Activated CD4-positive, alpha-beta T cell treated with anti-CD3 and anti-CD28 coated beads, Interleukin-2, amount 10 ng/mL, durations not matched to agents 24 days and 14 days (primary cell): ENCODE measurements at regions of chr18 and their contacts with region 1.

Region 1: DNA sequence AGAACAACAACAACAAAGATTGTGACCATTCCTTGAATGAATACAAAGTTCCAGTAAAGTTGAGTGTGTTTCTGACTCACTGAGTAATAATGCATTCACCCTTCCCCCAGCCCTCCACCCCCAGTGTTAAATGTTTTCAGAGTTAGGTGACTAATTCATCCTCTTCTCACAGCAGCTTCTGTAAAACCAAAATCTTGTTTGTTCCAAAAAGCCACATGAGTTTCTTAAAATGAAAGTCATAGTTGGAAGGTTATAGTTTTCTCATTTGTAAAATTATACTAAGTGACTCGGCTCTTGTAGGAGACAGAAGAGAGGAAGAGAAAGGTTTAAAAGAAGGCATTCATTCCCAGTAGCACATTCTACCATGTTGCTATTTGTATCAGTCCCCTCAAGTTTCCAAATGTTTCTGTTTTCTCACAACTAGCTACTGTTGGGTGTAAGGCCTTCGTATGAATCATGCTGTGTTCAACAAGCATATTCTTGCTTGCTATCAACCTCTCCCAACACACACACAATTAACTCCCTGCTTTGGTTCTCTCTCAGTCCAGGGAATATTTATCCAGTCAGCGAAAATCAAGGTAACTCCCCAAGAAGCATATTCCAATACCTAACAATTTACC is 75.3 kb downstream of the MBD2 start:
- DNase-seq: peak; percentile 75
- H3K4me3 Mint-ChIP-seq: peak overlapping the region; percentile 64
- H3K27ac Mint-ChIP-seq: peak overlapping the region; percentile 93
- H3K4me1 Mint-ChIP-seq: peaks cover 50% of the 10 kb centered on the region
- H3K27me3 Mint-ChIP-seq: no peaks in the 10 kb centered on the region

Region 2: GRCh38 chr18:54129448-54130067 is 19.6 kb before region 1 on chr18:
- intact Hi-C with region 1: loop called (anchors 2 kb)
- DNase-seq: peak; percentile 57
- H3K4me3 Mint-ChIP-seq: peak overlapping the region; percentile 32
- H3K27ac Mint-ChIP-seq: peak overlapping the region; percentile 55
- H3K4me1 Mint-ChIP-seq: peaks cover 15% of the 10 kb centered on the region
- H3K27me3 Mint-ChIP-seq: no peaks in the 10 kb centered on the region

Region 3: DNA sequence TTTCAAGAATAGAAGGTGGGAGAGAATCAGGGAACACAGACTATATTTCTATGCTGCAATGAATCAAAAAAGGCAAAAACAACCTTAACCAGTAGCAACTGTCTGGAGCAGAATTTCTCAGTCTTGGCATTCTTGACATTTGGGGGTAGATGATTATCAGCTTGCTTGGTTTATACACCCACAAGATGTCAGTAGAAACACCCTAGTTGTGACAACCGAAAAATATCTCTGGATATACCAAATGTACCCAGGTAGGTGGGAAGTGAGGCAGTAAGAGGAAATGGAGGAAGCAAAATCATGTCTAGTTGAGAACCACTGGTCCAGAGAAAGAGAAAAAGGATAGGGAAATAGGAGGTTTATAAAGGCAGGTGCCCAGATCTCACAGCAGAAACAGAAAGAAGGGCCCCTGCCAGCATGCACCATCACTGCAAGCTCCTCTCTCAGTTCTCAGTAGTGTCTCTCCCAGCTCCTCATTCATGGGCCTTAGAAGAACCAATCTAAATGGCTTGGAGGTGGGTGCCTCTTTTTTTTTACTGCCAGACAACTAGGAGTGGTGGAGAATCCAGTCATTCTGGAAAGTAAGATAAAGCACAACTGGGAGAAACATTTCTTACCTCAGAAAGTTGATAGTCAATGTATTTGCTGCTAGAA is 24.9 kb after region 1 on chr18:
- intact Hi-C with region 1: loop called (anchors 1 kb)
- DNase-seq: peak; percentile 63
- H3K4me3 Mint-ChIP-seq: peak overlapping the region; percentile 39
- H3K27ac Mint-ChIP-seq: peak overlapping the region; percentile 90
- H3K4me1 Mint-ChIP-seq: peaks cover 61% of the 10 kb centered on the region
- H3K27me3 Mint-ChIP-seq: no peaks in the 10 kb centered on the region

Region 4: DNA sequence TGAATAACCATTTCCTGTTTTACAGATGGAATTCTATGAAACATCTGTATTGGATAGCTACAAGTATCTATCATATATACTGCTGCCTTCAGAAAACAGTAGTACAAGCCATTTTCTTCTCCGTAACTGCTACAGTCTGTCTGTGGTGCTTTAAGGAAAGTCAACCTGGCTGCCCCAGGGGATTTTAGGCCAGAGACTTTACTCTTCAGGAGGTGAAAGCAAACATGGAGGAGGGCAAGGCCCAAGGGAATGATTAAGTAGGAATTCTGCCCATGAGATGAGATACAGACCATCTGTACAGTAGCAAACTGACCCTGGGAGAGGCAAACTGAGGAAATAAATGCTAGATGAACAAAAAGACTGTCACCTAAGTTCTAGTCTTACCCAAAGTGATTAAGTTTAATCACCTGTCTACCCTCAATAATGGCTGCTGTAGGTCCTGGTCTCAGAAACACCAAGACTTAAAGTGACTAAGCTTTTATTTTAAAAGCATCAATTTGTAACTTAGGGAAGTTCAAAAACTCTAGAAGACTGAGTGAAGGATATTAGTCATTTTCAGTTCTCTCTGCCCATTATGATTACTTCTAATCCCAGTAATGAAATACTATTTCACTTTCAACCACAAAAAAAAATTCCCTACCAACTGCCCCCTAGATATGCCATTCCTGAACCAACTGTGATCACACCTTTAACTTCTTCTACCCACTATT is 60.4 kb after region 1 on chr18:
- intact Hi-C with region 1: loop called (anchors 1 kb)
- DNase-seq: no peak
- H3K4me3 Mint-ChIP-seq: peak overlapping the region; percentile 49
- H3K27ac Mint-ChIP-seq: peak overlapping the region; percentile 79
- H3K4me1 Mint-ChIP-seq: peaks cover 50% of the 10 kb centered on the region
- H3K27me3 Mint-ChIP-seq: no peaks in the 10 kb centered on the region

Region 5: GRCh38 chr18:54261894-54262293 is 112.7 kb after region 1 on chr18:
- intact Hi-C with region 1: loop called (anchors 1 kb)
- DNase-seq: peak; percentile 69
- H3K4me3 Mint-ChIP-seq: peak overlapping the region; percentile 54
- H3K27ac Mint-ChIP-seq: peak overlapping the region; percentile 96
- H3K4me1 Mint-ChIP-seq: peaks cover 42% of the 10 kb centered on the region
- H3K27me3 Mint-ChIP-seq: no peaks in the 10 kb centered on the region

Region 6: GRCh38 chr18:54284981-54285785 is 136.0 kb after region 1 on chr18:
- intact Hi-C with region 1: loop called (anchors 1 kb)
- DNase-seq: peak; percentile 82
- H3K4me3 Mint-ChIP-seq: peak overlapping the region; percentile 19
- H3K27ac Mint-ChIP-seq: peak overlapping the region; percentile 78
- H3K4me1 Mint-ChIP-seq: peaks cover 18% of the 10 kb centered on the region
- H3K27me3 Mint-ChIP-seq: no peaks in the 10 kb centered on the region

Region 7: DNA sequence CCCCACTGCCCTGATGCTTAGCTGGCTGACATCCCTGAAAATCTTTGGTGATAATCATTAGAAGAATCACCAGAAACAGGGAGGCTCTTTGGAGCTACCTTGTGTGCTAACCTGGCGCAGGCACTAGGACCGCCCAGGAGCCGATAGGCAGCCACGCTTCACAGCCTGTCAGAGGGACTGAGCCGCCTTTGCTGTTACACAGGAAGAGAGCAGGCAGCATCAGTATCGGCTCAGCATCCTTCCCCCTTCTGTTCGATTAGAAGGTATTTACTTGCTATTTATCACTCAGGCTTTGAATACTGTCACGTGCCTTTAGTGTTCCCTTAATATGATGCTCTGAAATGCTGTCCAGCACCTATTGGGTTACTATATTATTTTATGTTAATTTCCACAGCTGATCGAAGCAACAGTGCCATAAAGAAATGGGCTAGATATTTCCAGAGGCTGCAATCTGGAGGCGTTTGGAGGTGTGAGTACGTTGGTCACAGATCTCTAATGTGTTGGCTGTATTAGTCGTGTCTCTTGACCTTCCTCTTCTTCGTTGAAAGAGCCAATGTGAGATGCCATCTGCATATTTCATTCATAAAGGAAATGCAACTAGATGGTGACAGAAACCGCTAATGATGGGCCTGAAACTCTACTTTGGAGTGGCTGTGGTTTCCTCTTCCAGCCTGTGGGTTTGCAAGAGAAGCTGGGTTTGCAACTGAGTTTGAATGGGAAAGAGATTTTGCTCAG is 568.7 kb after region 1 on chr18:
- intact Hi-C with region 1: loop called (anchors 5 kb)
- DNase-seq: peak; percentile 88
- H3K4me3 Mint-ChIP-seq: peak overlapping the region; percentile 77
- H3K27ac Mint-ChIP-seq: peak overlapping the region; percentile 15
- H3K4me1 Mint-ChIP-seq: peaks cover 48% of the 10 kb centered on the region
- H3K27me3 Mint-ChIP-seq: peaks cover 29% of the 10 kb centered on the region